Ovary (tissue), 10 donors: ENCODE measurements at regions of chrX and their contacts with region 1.

Region 1: GRCh38 chrX:14641681-14642655 is 112.6 kb downstream of the GLRA2 start:
- DNase-seq: no peak
- H3K4me3 ChIP-seq: no peak overlapping the region
- H3K27ac ChIP-seq: no peak overlapping the region
- H3K4me1 ChIP-seq: no peaks in the 10 kb centered on the region
- H3K27me3 ChIP-seq: no peaks in the 10 kb centered on the region
- CTCF ChIP-seq: no peak
- EP300 ChIP-seq: no peak
- POLR2A ChIP-seq: no peak

Region 2: DNA sequence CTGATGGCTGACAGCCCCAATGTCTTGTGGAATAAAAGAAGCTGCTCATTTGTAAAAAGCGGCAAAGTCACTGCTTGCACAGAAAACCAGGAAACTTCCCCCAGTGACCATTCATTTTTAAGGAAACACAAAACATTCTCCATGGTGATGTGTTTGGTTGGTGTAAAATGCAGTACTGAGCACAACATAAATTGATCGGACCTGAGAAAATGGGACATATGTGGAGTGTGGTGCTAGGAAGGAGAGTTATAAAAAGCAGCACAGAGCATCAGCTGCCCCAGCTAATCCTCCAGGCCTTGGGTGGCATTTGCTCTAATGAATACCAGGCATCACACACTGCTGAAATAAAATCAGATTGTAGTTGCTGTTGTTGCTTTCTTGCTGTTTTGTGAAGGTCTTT is 57.4 kb before region 1 on chrX:
- intact Hi-C with region 1: loop called in 1 of 4 experiments (anchors 2 kb)
- DNase-seq: no peak
- H3K4me3 ChIP-seq: no peak overlapping the region
- H3K27ac ChIP-seq: no peak overlapping the region
- H3K4me1 ChIP-seq: no peaks in the 10 kb centered on the region
- H3K27me3 ChIP-seq: no peaks in the 10 kb centered on the region
- CTCF ChIP-seq: no peak
- EP300 ChIP-seq: no peak
- POLR2A ChIP-seq: no peak